ENCODE measurements at regions of chr16 and their contacts with region 1.

Region 1: GRCh38 chr16:19555162-19555937 is at the start of gene VPS35L:
- DNase-seq: peak; percentile 99
- H3K4me3 ChIP-seq: peak within 1 kb of the TSS; percentile 93
- H3K27ac ChIP-seq: peak within 1 kb of the TSS; percentile 80
- H3K27me3 ChIP-seq: no peaks in the 10 kb centered on the region
- CTCF ChIP-seq: peak; percentile 68
- polyA plus RNA-seq, gene VPS35L: 67.1 and 77.8 TPM in 2 replicates

Region 2: GRCh38 chr16:19432429-19432828 is 122.9 kb before region 1 on chr16:
- CTCF ChIA-PET with region 1: no interaction called
- POLR2A ChIA-PET with region 1: no interaction called
- DNase-seq: no peak
- H3K4me3 ChIP-seq: no peak overlapping the region
- H3K27ac ChIP-seq: no peak overlapping the region
- H3K27me3 ChIP-seq: no peaks in the 10 kb centered on the region
- CTCF ChIP-seq: no peak

Region 3: GRCh38 chr16:19521471-19522396 is 33.6 kb before region 1 on chr16 and contains the start of gene GDE1:
- CTCF ChIA-PET with region 1: interaction called, 7 read pairs
- POLR2A ChIA-PET with region 1: interaction called, 22 read pairs
- DNase-seq: peak; percentile 62
- H3K4me3 ChIP-seq: peak within 1 kb of the TSS; percentile 88
- H3K27ac ChIP-seq: peak within 1 kb of the TSS; percentile 84
- H3K27me3 ChIP-seq: no peaks in the 10 kb centered on the region
- CTCF ChIP-seq: peak; percentile 49
- polyA plus RNA-seq, gene GDE1: 89.7 and 100 TPM in 2 replicates

Region 4: GRCh38 chr16:19583665-19584300 is 28.4 kb after region 1 on chr16:
- CTCF ChIA-PET with region 1: interaction called, 22 read pairs
- POLR2A ChIA-PET with region 1: interaction called, 12 read pairs
- DNase-seq: peak; percentile 18
- H3K4me3 ChIP-seq: no peak overlapping the region
- H3K27ac ChIP-seq: no peak overlapping the region
- H3K27me3 ChIP-seq: no peaks in the 10 kb centered on the region
- CTCF ChIP-seq: peak; percentile 94

Region 5: GRCh38 chr16:19601083-19601976 is 46.0 kb after region 1 on chr16:
- CTCF ChIA-PET with region 1: interaction called, 15 read pairs
- POLR2A ChIA-PET with region 1: no interaction called
- DNase-seq: no peak
- H3K4me3 ChIP-seq: no peak overlapping the region
- H3K27ac ChIP-seq: no peak overlapping the region
- H3K27me3 ChIP-seq: no peaks in the 10 kb centered on the region
- CTCF ChIP-seq: peak; percentile 65

Region 6: GRCh38 chr16:19898924-19899604 is 343.7 kb after region 1 on chr16:
- CTCF ChIA-PET with region 1: interaction called, 12 read pairs
- POLR2A ChIA-PET with region 1: no interaction called
- DNase-seq: no peak
- H3K4me3 ChIP-seq: no peak overlapping the region
- H3K27ac ChIP-seq: no peak overlapping the region
- H3K27me3 ChIP-seq: peaks cover 3% of the 10 kb centered on the region
- CTCF ChIP-seq: peak; percentile 87

Measured in AG04450 (cell line).